ENCODE measurements at regions of chr1 and their contacts with region 1.

Region 1: DNA sequence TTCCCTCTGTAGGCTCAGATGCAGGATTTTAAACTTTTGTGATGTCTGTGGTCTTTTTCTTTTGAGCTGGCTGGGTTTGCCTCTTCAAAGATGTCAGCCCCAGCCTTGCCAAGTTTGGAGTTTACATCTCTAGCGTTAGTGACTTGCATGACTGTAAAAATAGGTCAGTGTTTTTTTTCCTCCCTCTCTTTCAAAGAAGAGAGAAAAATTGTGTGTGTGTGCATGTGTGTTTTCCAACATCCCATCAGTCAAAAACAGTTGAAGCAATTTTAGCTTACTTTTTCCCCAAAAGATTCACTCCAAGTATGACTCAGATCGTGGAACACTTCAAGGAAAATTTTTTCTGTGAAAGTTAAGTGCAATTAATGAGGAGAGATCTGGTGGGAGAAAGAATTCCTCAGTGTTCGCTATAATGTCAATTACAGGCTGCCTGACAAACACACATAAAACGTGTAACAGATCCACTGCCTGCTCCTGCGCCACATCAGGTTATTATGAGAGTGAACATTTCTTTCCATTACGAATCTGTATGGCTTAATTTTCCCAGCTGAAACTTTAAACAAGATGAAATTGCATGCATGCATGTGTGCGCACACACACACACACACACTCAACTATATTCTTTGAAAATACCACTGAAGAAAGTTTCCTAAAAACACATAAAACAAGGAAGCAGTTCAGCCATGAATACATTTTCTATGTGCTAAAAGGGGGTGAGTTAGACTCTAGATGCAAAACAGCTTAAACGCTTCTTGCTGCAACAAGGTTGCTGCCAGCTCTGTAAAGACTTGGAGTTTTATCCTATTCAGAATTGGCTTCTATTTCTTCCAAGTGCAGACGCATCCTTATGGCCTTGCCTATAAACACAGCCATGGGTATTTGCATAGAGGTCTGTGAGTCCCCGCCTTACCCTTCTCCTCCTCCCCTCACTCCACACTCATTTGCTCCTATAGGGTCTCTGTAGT is 55.5 kb downstream of the TLR5 start:
- DNase-seq: no peak
- H3K4me3 ChIP-seq: no peak overlapping the region
- CTCF ChIP-seq: no peak

Region 2: DNA sequence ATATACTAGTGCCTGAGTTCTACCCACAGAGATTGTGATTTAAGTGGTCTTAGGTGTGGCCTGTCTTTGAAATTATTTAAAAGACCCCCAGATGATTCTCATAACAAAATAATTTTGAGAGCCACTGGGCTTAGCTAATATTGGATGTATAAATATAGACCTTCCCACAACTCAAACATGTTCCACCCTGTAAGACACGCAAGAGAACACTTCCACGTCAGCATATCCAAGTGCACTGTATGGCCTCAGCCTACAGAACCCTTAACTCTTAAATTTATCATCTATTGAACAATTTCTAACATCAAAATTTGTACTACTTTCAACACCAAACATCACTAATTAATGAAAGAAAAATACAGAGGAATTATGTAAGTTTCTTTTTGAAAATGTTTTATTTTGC is 348.1 kb before region 1 on chr1:
- CTCF ChIA-PET with region 1: interaction called, 27 read pairs
- POLR2A ChIA-PET with region 1: no interaction called
- DNase-seq: no peak
- H3K4me3 ChIP-seq: no peak overlapping the region
- CTCF ChIP-seq: no peak

Region 3: DNA sequence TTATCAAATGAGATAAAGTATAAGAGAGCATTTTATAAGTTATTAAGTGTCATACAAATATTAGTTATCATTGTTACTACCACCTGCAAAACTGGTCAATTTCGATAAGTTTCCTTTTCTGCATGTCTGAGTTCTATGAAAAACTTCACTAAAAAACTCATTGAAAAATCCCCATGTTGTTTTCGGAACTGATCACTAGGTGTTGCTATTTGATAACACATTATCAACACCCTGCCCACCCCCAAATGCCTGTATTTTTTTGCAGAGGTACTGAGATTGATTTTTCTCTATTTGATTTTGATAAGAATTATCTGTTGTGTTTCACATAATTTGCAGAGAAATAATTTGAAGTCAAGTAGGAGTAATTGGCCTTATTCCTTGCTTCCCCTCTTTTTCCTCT is 294.8 kb before region 1 on chr1:
- CTCF ChIA-PET with region 1: interaction called, 115 read pairs
- POLR2A ChIA-PET with region 1: no interaction called
- DNase-seq: no peak
- H3K4me3 ChIP-seq: no peak overlapping the region
- CTCF ChIP-seq: peak; percentile 20

Region 4: GRCh38 chr1:223074445-223075300 is 12.9 kb before region 1 on chr1:
- CTCF ChIA-PET with region 1: interaction called, 28 read pairs
- POLR2A ChIA-PET with region 1: no interaction called
- DNase-seq: no peak
- H3K4me3 ChIP-seq: no peak overlapping the region
- CTCF ChIP-seq: no peak

Region 5: GRCh38 chr1:223102797-223103533 is 15.4 kb after region 1 on chr1:
- CTCF ChIA-PET with region 1: interaction called, 19 read pairs
- POLR2A ChIA-PET with region 1: no interaction called
- DNase-seq: no peak
- H3K4me3 ChIP-seq: no peak overlapping the region
- CTCF ChIP-seq: no peak

Region 6: GRCh38 chr1:223133824-223134435 is 46.4 kb after region 1 on chr1:
- CTCF ChIA-PET with region 1: interaction called, 12 read pairs
- POLR2A ChIA-PET with region 1: no interaction called
- DNase-seq: no peak
- H3K4me3 ChIP-seq: peak overlapping the region; percentile 46
- CTCF ChIP-seq: peak; percentile 90

Region 7: DNA sequence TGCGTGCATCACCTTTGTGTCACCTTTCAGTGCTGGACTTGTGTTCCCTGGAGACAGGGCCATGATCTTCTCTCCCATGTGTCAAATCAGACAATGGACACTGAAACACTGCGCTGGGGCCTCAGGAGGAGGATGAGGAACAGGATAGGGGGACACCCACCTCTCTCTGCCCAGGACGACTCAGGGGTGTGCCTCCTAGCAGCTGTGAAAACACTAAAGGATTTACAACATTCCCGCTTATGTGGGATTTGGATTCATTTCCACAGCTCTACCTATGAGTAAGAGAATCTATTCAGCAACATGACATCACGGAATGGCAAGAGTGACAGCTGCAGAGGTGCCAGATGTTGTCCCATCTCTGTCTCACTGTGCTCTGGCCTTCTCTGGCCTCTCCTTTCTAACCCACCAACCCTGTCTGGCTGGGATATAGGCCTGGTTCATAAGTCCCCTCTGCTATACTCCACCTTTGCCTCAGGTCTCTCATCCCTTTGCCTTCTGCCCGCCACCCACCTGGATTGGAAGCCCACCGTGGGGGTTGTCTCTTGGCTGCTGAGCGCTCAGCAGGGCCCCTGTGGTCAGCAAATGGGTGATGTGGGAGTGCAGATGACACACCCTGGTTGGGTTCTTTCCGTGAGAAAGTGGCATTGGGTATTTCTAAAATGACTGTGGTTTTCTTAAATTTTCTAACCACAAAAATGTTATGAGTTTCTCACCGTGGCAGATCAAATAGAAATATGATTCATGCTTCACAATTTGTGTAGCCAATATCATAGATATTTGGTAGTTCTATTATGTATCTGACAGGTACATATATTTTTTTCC is 102.5 kb after region 1 on chr1:
- CTCF ChIA-PET with region 1: no interaction called
- POLR2A ChIA-PET with region 1: no interaction called
- DNase-seq: no peak
- H3K4me3 ChIP-seq: no peak overlapping the region
- CTCF ChIP-seq: no peak

Measured in AG04449 (cell line).